ENCODE measurements at regions of chr5 and their contacts with region 1.

Region 1: GRCh38 chr5:170302653-170303501 is 5.3 kb upstream of the LCP2 start:
- DNase-seq: peak; percentile 36 to 96 (median 58)
- ATAC-seq: peak; percentile 95
- H3K4me3 ChIP-seq: peak overlapping the region; percentile 47
- H3K4me3 Mint-ChIP-seq: peak overlapping the region; percentile 87
- H3K27ac ChIP-seq: peak overlapping the region; percentile 88 to 92
- H3K27ac Mint-ChIP-seq: peak overlapping the region; percentile 96
- H3K4me1 ChIP-seq: peaks cover 82% of the 10 kb centered on the region
- H3K4me1 Mint-ChIP-seq: peaks cover 87% of the 10 kb centered on the region
- H3K27me3 ChIP-seq: no peaks in the 10 kb centered on the region
- H3K27me3 Mint-ChIP-seq: no peaks in the 10 kb centered on the region
- CTCF ChIP-seq: peak; percentile 27

Region 2: DNA sequence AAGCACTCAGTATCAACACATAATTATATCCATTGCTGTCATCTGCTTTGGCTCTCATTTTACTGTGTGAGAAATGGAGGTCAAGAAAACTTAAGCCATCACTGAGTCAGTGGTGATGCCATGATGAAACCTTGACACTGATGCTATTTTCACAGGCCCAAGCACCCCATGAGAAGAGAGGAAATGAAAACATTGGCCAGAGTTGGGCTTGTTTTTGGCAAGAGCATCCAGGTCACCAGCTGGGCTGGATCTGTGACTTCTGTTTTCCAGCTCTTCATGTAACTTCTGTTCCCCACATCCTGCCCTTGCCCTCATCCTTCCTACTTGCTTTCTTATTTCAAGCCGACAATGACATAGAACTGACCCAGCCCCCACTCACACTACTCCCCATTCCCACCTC is 15.3 kb before region 1 on chr5:
- CTCF ChIA-PET with region 1: interaction called, 12 read pairs
- POLR2A ChIA-PET with region 1: interaction called, 84 read pairs
- intact Hi-C with region 1: no loop called
- DNase-seq: peak in 3 of 14 experiments; percentile 50 to 55 (median 51)
- ATAC-seq: no peak
- H3K4me3 ChIP-seq: no peak overlapping the region
- H3K4me3 Mint-ChIP-seq: peak overlapping the region; percentile 47
- H3K27ac ChIP-seq: peak overlapping the region; percentile 62 to 63
- H3K27ac Mint-ChIP-seq: peak overlapping the region; percentile 96
- H3K4me1 ChIP-seq: peaks cover 94% of the 10 kb centered on the region
- H3K4me1 Mint-ChIP-seq: peaks cover 100% of the 10 kb centered on the region
- H3K27me3 ChIP-seq: no peaks in the 10 kb centered on the region
- H3K27me3 Mint-ChIP-seq: no peaks in the 10 kb centered on the region
- CTCF ChIP-seq: no peak

Region 3: DNA sequence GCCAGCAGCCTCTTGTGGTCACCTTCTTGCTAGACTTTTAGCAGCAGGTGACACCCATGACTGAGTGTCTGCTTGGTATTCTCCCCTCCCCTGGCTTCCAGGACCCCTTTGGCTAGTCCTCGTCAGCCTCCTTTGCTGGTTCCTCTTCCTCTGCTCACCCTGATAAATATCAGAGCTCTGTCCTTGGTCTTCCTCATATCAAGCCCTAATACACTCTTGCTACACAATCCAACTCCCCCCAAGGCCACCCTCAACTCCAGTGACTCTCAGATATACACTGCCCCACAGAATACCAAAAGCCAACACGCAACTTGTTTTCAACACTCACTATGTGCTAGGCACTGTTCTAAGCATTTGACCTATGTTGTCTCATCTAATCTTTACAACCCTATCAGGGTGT is 25.0 kb after region 1 on chr5:
- CTCF ChIA-PET with region 1: interaction called, 10 read pairs
- POLR2A ChIA-PET with region 1: interaction called, 236 read pairs
- intact Hi-C with region 1: loop called in 1 of 2 experiments (anchors 1 kb)
- DNase-seq: no peak
- ATAC-seq: no peak
- H3K4me3 ChIP-seq: no peak overlapping the region
- H3K4me3 Mint-ChIP-seq: no peak overlapping the region
- H3K27ac ChIP-seq: no peak overlapping the region
- H3K27ac Mint-ChIP-seq: no peak overlapping the region
- H3K4me1 ChIP-seq: peaks cover 55% of the 10 kb centered on the region
- H3K4me1 Mint-ChIP-seq: peaks cover 23% of the 10 kb centered on the region
- H3K27me3 ChIP-seq: no peaks in the 10 kb centered on the region
- H3K27me3 Mint-ChIP-seq: no peaks in the 10 kb centered on the region
- CTCF ChIP-seq: no peak

Region 4: GRCh38 chr5:170782438-170782837 is 479.6 kb after region 1 on chr5:
- CTCF ChIA-PET with region 1: no interaction called
- POLR2A ChIA-PET with region 1: no interaction called
- intact Hi-C with region 1: no loop called
- DNase-seq: no peak
- ATAC-seq: no peak
- H3K4me3 ChIP-seq: no peak overlapping the region
- H3K4me3 Mint-ChIP-seq: no peak overlapping the region
- H3K27ac ChIP-seq: no peak overlapping the region
- H3K27ac Mint-ChIP-seq: no peak overlapping the region
- H3K4me1 ChIP-seq: no peaks in the 10 kb centered on the region
- H3K4me1 Mint-ChIP-seq: no peaks in the 10 kb centered on the region
- H3K27me3 ChIP-seq: peaks cover 2 to 6% of the 10 kb centered on the region in 2 experiments
- H3K27me3 Mint-ChIP-seq: no peaks in the 10 kb centered on the region
- CTCF ChIP-seq: no peak